ENCODE measurements at regions of chr12 and their contacts with region 1.

Region 1: GRCh38 chr12:46237371-46238045 is 31.3 kb downstream of the SLC38A1 start:
- DNase-seq: no peak
- ATAC-seq: no peak
- H3K4me3 ChIP-seq: no peak overlapping the region
- H3K4me3 Mint-ChIP-seq: peak overlapping the region; percentile 22
- H3K27ac ChIP-seq: peak overlapping the region in 1 of 2 experiments; percentile 3
- H3K27ac Mint-ChIP-seq: peak overlapping the region; percentile 83
- H3K4me1 ChIP-seq: peaks cover 61% of the 10 kb centered on the region
- H3K4me1 Mint-ChIP-seq: peaks cover 87% of the 10 kb centered on the region
- H3K27me3 ChIP-seq: no peaks in the 10 kb centered on the region
- H3K27me3 Mint-ChIP-seq: no peaks in the 10 kb centered on the region
- CTCF ChIP-seq: no peak

Region 2: DNA sequence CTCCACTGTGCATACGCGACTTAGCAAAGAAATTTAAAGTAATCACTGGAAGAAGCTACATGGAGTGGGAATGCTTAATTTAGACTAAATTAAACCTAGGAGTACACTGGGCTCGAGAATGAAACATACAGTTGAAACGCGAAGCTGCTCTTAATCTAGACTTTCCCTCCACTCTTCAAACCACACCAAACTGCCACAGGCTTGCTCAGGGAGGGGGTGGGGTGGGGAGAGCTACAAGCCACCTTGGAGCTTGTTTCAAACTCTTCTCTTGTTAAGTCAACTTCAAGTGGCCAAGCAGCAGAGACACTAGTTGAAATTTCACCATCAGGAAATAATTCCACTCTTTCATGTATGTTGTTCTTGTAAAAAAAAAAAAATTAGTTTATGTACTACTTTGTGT is 38.6 kb before region 1 on chr12:
- CTCF ChIA-PET with region 1: interaction called, 3 read pairs
- POLR2A ChIA-PET with region 1: interaction called, 4 read pairs
- intact Hi-C with region 1: loop called in 1 of 2 experiments (anchors 5 kb)
- DNase-seq: peak in 1 of 9 experiments; percentile 34
- ATAC-seq: no peak
- H3K4me3 ChIP-seq: no peak overlapping the region
- H3K4me3 Mint-ChIP-seq: no peak overlapping the region
- H3K27ac ChIP-seq: no peak overlapping the region
- H3K27ac Mint-ChIP-seq: peak overlapping the region; percentile 73
- H3K4me1 ChIP-seq: peaks cover 11% of the 10 kb centered on the region
- H3K4me1 Mint-ChIP-seq: peaks cover 38% of the 10 kb centered on the region
- H3K27me3 ChIP-seq: no peaks in the 10 kb centered on the region
- H3K27me3 Mint-ChIP-seq: no peaks in the 10 kb centered on the region
- CTCF ChIP-seq: no peak

Region 3: DNA sequence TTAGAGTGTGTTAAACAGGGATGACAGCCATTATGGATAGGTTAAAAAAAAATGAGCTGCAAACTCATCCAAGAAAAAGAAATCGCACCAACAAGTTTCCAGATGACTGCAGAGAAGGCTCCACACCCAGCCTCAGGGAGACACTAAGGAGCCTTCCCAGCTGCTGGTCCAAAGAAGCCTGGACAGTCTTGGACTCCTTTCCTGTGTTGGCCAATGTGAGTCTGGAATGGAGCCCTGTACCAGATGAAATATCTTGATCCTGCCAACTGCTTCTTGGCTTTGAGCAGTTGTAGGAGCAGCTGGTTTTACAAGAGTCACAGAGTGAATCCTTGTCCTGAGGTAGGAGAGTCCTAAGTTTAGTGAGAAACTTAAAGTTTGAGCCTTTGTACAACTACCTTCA is 13.1 kb before region 1 on chr12:
- CTCF ChIA-PET with region 1: no interaction called
- POLR2A ChIA-PET with region 1: interaction called, 6 read pairs
- intact Hi-C with region 1: loop called (anchors 2 kb)
- DNase-seq: no peak
- ATAC-seq: no peak
- H3K4me3 ChIP-seq: no peak overlapping the region
- H3K4me3 Mint-ChIP-seq: no peak overlapping the region
- H3K27ac ChIP-seq: peak overlapping the region in 1 of 2 experiments; percentile 22
- H3K27ac Mint-ChIP-seq: peak overlapping the region; percentile 87
- H3K4me1 ChIP-seq: peaks cover 70% of the 10 kb centered on the region
- H3K4me1 Mint-ChIP-seq: peaks cover 93% of the 10 kb centered on the region
- H3K27me3 ChIP-seq: no peaks in the 10 kb centered on the region
- H3K27me3 Mint-ChIP-seq: no peaks in the 10 kb centered on the region
- CTCF ChIP-seq: no peak